IMR-90 (cell line): ENCODE measurements at regions of chr3 and their contacts with region 1.

Region 1: DNA sequence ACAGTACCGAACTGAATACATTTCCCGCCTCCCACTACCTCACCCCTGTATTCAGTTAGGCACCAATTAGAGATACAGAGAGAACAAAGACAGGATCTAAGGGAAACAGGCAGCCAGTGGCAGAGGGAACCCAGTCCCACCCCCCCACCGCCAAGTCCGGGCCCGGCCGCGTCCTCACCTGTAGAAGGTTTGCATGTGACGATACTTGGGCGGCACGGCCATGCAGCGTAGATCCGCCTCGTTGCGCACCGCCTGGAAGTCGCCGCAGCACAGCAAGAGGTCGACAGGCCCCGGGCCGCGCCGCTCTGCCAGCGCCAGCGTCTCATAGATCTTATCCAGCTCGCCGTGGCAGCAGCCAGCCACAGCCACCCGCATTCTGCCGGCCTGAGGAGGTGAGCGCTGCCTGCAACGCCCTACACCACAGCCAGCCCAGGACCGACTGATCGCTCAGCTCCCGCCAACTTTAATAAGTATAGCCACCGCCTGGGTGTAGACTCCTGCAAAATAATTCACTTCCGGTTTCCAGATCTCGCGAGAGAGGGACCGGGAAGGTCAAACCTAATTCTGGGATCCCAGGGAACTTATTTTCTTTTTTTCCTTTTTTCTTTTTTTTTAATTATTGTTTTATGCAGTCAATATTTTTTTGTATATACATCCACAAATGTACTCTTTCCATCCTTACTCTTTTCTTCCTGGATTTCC is at the start of gene DBR1:
- DNase-seq: peak; percentile 80
- ATAC-seq: peak; percentile 96
- H3K4me3 ChIP-seq: peak within 1 kb of the TSS; percentile 87
- H3K27ac ChIP-seq: peak within 1 kb of the TSS; percentile 84
- H3K4me1 ChIP-seq: no peaks in the 10 kb centered on the region
- H3K27me3 ChIP-seq: no peaks in the 10 kb centered on the region; the same call in 1 of the 2 replicates
- CTCF ChIP-seq: no peak
- POLR2A ChIP-seq: peak; percentile 89
- RAD21 ChIP-seq: no peak
- total RNA-seq, gene DBR1: 12.5 and 17.5 TPM in 2 replicates

Region 2: GRCh38 chr3:138082085-138082991 is 92.2 kb before region 1 on chr3:
- CTCF ChIA-PET with region 1: no interaction called
- POLR2A ChIA-PET with region 1: no interaction called
- dilution Hi-C with region 1: no loop called
- in situ Hi-C with region 1: loop called (anchors 10 kb)
- intact Hi-C with region 1: no loop called
- DNase-seq: peak; percentile 93
- ATAC-seq: peak; percentile 59
- H3K4me3 ChIP-seq: peak overlapping the region; percentile 26
- H3K27ac ChIP-seq: peak overlapping the region; percentile 71
- H3K4me1 ChIP-seq: peaks cover 26% of the 10 kb centered on the region
- H3K27me3 ChIP-seq: no peaks in the 10 kb centered on the region
- CTCF ChIP-seq: no peak
- POLR2A ChIP-seq: no peak
- RAD21 ChIP-seq: no peak; the same call in 1 of the 2 replicates

Region 3: GRCh38 chr3:138389841-138390586 is 215.4 kb after region 1 on chr3:
- CTCF ChIA-PET with region 1: no interaction called
- POLR2A ChIA-PET with region 1: interaction called, 13 read pairs
- dilution Hi-C with region 1: no loop called
- in situ Hi-C with region 1: no loop called
- intact Hi-C with region 1: no loop called
- DNase-seq: peak; percentile 94
- ATAC-seq: peak; percentile 86
- H3K4me3 ChIP-seq: no peak overlapping the region
- H3K27ac ChIP-seq: peak overlapping the region; percentile 18
- H3K4me1 ChIP-seq: peaks cover 12% of the 10 kb centered on the region
- H3K27me3 ChIP-seq: no peaks in the 10 kb centered on the region
- CTCF ChIP-seq: no peak
- POLR2A ChIP-seq: no peak
- RAD21 ChIP-seq: no peak